GM10248 (cell line): ENCODE measurements at regions of chr4 and their contacts with region 1.

Region 1: GRCh38 chr4:74133786-74134499 is 24.0 kb upstream of the MTHFD2L start:
- DNase-seq: peak; percentile 26
- CTCF ChIP-seq: peak; percentile 71

Region 2: DNA sequence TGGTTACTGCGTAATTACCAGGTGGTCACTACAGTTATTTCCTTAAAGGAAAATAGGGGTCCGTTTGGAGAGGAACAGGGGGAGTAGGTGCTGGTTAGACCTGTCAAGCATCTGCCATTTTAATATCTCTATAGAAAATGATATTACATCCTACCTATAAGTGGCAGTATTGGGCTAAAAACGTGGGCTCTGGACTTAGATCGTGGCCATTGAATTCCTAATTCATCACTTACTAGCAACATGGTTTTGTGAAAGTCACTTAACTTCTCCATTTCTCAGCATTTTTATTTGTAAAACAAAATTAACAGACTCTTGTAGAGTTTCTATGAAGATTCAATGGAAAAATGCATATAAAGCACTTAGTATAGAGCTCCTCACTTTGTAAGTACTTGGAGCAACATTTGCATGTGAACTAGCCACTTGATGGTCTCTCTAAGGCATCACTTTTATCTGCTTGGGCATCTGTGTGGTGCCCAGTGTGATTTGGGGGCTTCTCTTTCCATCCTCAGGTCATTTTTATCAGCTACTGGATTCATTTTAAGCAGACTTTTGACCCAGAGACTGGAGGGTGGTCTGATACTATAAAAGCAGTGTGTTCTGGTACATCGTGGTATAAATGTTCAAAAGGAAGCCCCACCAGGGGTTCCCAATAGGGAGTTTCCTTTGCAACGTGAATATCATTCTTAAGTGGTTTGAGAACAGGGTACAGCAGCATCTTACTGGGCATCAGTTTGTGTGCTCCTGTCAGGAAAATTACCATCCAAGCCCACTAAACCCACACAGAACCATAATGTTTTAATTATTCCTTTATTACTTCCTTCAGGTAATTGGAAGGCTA is 471.0 kb before region 1 on chr4:
- CTCF ChIA-PET with region 1: interaction called, 19 read pairs
- POLR2A ChIA-PET with region 1: no interaction called
- DNase-seq: peak; percentile 30
- CTCF ChIP-seq: peak; percentile 28

Region 3: DNA sequence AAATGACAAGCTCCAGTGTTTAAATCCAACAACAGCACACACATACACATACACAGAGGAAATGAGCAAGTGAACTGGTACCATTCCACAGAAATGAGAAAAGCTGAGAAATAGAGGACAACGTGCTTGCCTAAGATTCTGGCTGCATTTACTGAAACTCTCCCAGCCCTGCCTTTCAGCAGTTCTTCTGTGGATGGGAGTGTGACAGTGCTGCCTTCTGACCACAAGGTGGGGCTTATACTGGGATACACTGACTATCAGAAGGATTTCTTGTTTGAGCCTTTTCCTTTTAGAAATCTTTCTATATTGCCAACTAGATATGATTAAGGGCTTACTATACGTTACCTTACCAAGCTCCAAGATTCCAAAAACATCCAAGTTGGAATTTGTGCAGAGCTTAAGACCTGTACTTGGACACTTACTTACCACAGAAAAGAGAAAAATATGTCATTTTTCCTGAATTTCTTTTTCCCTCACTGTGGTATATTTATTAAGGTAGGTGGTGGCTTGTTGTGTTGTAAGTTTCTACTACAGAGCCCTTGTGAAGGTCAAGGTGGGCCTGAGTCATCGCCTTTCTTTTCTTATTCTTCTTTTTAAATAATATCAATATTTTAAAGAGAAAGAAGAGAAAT is 404.3 kb before region 1 on chr4:
- CTCF ChIA-PET with region 1: interaction called, 19 read pairs
- POLR2A ChIA-PET with region 1: no interaction called
- DNase-seq: peak; percentile 27
- CTCF ChIP-seq: peak; percentile 71

Region 4: GRCh38 chr4:74085669-74086068 is 48.3 kb before region 1 on chr4:
- CTCF ChIA-PET with region 1: no interaction called
- POLR2A ChIA-PET with region 1: no interaction called
- DNase-seq: no peak
- CTCF ChIP-seq: no peak

Region 5: GRCh38 chr4:74104145-74104544 is 29.8 kb before region 1 on chr4:
- CTCF ChIA-PET with region 1: no interaction called
- POLR2A ChIA-PET with region 1: no interaction called
- DNase-seq: no peak
- CTCF ChIP-seq: no peak

Region 6: GRCh38 chr4:74117024-74117534 is 16.9 kb before region 1 on chr4:
- CTCF ChIA-PET with region 1: interaction called, 22 read pairs
- POLR2A ChIA-PET with region 1: no interaction called
- DNase-seq: no peak
- CTCF ChIP-seq: no peak

Region 7: DNA sequence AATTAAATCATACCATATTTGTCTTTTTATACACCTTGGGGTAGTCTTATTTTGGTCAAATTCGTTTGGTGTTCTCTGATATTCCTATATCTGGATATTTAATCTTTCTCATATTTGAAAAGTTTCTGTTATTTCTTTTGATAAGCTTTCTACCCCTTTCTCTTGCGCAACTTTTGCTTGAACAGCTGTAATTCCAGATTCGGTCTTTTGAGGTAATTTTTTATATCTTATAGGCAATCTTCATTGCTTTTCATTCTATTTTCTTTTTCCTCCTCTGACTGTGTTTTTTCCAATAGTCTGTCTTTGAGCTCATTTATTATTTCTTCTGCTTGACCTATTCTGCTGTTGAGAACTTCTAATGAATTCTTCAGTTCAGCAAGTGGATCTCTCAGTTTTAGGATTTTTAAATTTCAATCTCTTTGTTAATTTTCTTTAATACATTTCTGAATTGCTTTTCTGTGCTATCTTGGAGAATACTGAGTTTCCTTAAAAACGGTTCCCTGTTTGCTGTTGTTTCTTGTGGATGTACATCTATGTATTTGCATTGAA is 12.7 kb after region 1 on chr4:
- CTCF ChIA-PET with region 1: interaction called, 19 read pairs
- POLR2A ChIA-PET with region 1: no interaction called
- DNase-seq: no peak
- CTCF ChIP-seq: no peak

Region 8: GRCh38 chr4:74152836-74153235 is 18.9 kb after region 1 on chr4:
- CTCF ChIA-PET with region 1: interaction called, 12 read pairs
- POLR2A ChIA-PET with region 1: no interaction called
- DNase-seq: no peak
- CTCF ChIP-seq: no peak